Panc1 (cell line): ENCODE measurements at regions of chr5 and their contacts with region 1.

Region 1: GRCh38 chr5:163661360-163661759 is 155.9 kb downstream of the MAT2B start:
- DNase-seq: no peak
- ATAC-seq: no peak
- H3K4me3 ChIP-seq: no peak overlapping the region
- H3K27ac ChIP-seq: no peak overlapping the region
- H3K4me1 ChIP-seq: no peaks in the 10 kb centered on the region
- H3K27me3 ChIP-seq: no peaks in the 10 kb centered on the region
- CTCF ChIP-seq: no peak

Region 2: GRCh38 chr5:163478126-163478981 is 183.0 kb before region 1 on chr5:
- CTCF ChIA-PET with region 1: no interaction called
- POLR2A ChIA-PET with region 1: no interaction called
- in situ Hi-C with region 1: no loop called
- intact Hi-C with region 1: no loop called
- DNase-seq: no peak
- ATAC-seq: no peak
- H3K4me3 ChIP-seq: no peak overlapping the region
- H3K27ac ChIP-seq: no peak overlapping the region
- H3K4me1 ChIP-seq: no peaks in the 10 kb centered on the region; the same call in 1 of the 2 replicates
- H3K27me3 ChIP-seq: no peaks in the 10 kb centered on the region
- CTCF ChIP-seq: no peak

Region 3: GRCh38 chr5:163846516-163846915 is 185.2 kb after region 1 on chr5:
- CTCF ChIA-PET with region 1: no interaction called
- POLR2A ChIA-PET with region 1: no interaction called
- in situ Hi-C with region 1: no loop called
- intact Hi-C with region 1: loop called (anchors 1 kb)
- DNase-seq: no peak
- ATAC-seq: no peak
- H3K4me3 ChIP-seq: no peak overlapping the region
- H3K27ac ChIP-seq: no peak overlapping the region
- H3K4me1 ChIP-seq: no peaks in the 10 kb centered on the region
- H3K27me3 ChIP-seq: no peaks in the 10 kb centered on the region
- CTCF ChIP-seq: no peak

Region 4: GRCh38 chr5:164383662-164384061 is 722.3 kb after region 1 on chr5:
- CTCF ChIA-PET with region 1: no interaction called
- POLR2A ChIA-PET with region 1: no interaction called
- in situ Hi-C with region 1: no loop called
- intact Hi-C with region 1: no loop called
- DNase-seq: no peak
- ATAC-seq: no peak
- H3K4me3 ChIP-seq: no peak overlapping the region
- H3K27ac ChIP-seq: no peak overlapping the region
- H3K4me1 ChIP-seq: no peaks in the 10 kb centered on the region
- H3K27me3 ChIP-seq: no peaks in the 10 kb centered on the region
- CTCF ChIP-seq: no peak